Activated naive CD4-positive, alpha-beta T cell treated with anti-CD3 and anti-CD28 coated beads for 36 hours (primary cell): ENCODE measurements at regions of chr6 and their contacts with region 1.

Region 1: DNA sequence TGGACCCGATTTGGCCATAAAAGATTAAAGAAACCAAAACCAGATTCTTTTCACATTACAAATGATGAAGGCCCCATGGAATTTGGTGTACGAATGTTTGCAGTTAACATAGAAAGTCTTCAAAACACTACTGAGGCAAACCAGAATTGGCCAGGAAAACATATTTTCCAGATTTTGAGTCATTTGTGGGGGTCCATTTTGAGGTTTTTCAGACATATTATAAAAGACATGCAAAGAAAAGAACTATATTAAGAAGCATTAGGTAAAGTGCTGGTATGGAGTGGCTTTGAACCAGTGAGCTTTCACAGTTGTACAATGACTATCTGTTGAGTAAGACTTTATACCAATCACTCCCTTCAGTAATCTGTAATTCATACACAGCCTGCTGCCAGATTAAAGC is 168.9 kb upstream of the COL21A1 start:
- DNase-seq: no peak
- H3K4me3 Mint-ChIP-seq: no peak overlapping the region
- H3K27ac Mint-ChIP-seq: no peak overlapping the region
- H3K4me1 Mint-ChIP-seq: no peaks in the 10 kb centered on the region
- H3K27me3 Mint-ChIP-seq: peaks cover 4% of the 10 kb centered on the region

Region 2: GRCh38 chr6:56370561-56371211 is 45.6 kb before region 1 on chr6:
- CTCF ChIA-PET with region 1: no interaction called
- intact Hi-C with region 1: loop called (anchors 5 kb)
- DNase-seq: no peak
- H3K4me3 Mint-ChIP-seq: no peak overlapping the region
- H3K27ac Mint-ChIP-seq: no peak overlapping the region
- H3K4me1 Mint-ChIP-seq: peaks cover 9% of the 10 kb centered on the region
- H3K27me3 Mint-ChIP-seq: peaks cover 4% of the 10 kb centered on the region

Region 3: GRCh38 chr6:56381840-56382251 is 34.4 kb before region 1 on chr6:
- CTCF ChIA-PET with region 1: no interaction called
- intact Hi-C with region 1: no loop called
- DNase-seq: no peak
- H3K4me3 Mint-ChIP-seq: no peak overlapping the region
- H3K27ac Mint-ChIP-seq: no peak overlapping the region
- H3K4me1 Mint-ChIP-seq: no peaks in the 10 kb centered on the region
- H3K27me3 Mint-ChIP-seq: no peaks in the 10 kb centered on the region